ENCODE measurements at regions of chr7 and their contacts with region 1.

Region 1: GRCh38 chr7:84188786-84189405 is 5.7 kb downstream of the SEMA3A start:
- DNase-seq: no peak
- H3K4me3 ChIP-seq: no peak overlapping the region
- H3K27ac ChIP-seq: no peak overlapping the region
- H3K27me3 ChIP-seq: no peaks in the 10 kb centered on the region
- CTCF ChIP-seq: peak in 53 of 56 donors; percentile 24 to 76 (median 49)

Region 2: GRCh38 chr7:83976295-83976694 is 212.6 kb before region 1 on chr7:
- intact Hi-C with region 1: loop called (anchors 2 to 10 kb)
- DNase-seq: no peak
- H3K4me3 ChIP-seq: no peak overlapping the region
- H3K27ac ChIP-seq: no peak overlapping the region
- H3K27me3 ChIP-seq: no peaks in the 10 kb centered on the region
- CTCF ChIP-seq: peak; percentile 66 to 98 (median 83)

Region 3: GRCh38 chr7:83984076-83984475 is 204.8 kb before region 1 on chr7:
- intact Hi-C with region 1: loop called in 1 of 2 experiments (anchors 10 kb)
- DNase-seq: no peak
- H3K4me3 ChIP-seq: no peak overlapping the region
- H3K27ac ChIP-seq: no peak overlapping the region
- H3K27me3 ChIP-seq: no peaks in the 10 kb centered on the region
- CTCF ChIP-seq: no peak

Region 4: GRCh38 chr7:84042110-84042539 is 146.8 kb before region 1 on chr7:
- intact Hi-C with region 1: loop called in 1 of 2 experiments (anchors 10 kb)
- DNase-seq: no peak
- H3K4me3 ChIP-seq: no peak overlapping the region
- H3K27ac ChIP-seq: no peak overlapping the region
- H3K27me3 ChIP-seq: no peaks in the 10 kb centered on the region
- CTCF ChIP-seq: no peak

Region 5: GRCh38 chr7:84578825-84579224 is 389.9 kb after region 1 on chr7:
- intact Hi-C with region 1: no loop called
- DNase-seq: no peak
- H3K4me3 ChIP-seq: no peak overlapping the region
- H3K27ac ChIP-seq: no peak overlapping the region
- H3K27me3 ChIP-seq: no peaks in the 10 kb centered on the region
- CTCF ChIP-seq: no peak